Activated T-helper 1 cell treated with anti-CD3 and anti-CD28 coated beads, Interleukin-12 subunit alpha, Interleukin-12 subunit beta, Interleukin-2, Interleukin-4 antibody, amounts not matched to agents 30 ng/mL and 10 ng/mL and 1 ng/mL, durations not matched to agents 14 hours and 24 hours and 36 hours (primary cell): ENCODE measurements at regions of chr17 and their contacts with region 1.

Region 1: DNA sequence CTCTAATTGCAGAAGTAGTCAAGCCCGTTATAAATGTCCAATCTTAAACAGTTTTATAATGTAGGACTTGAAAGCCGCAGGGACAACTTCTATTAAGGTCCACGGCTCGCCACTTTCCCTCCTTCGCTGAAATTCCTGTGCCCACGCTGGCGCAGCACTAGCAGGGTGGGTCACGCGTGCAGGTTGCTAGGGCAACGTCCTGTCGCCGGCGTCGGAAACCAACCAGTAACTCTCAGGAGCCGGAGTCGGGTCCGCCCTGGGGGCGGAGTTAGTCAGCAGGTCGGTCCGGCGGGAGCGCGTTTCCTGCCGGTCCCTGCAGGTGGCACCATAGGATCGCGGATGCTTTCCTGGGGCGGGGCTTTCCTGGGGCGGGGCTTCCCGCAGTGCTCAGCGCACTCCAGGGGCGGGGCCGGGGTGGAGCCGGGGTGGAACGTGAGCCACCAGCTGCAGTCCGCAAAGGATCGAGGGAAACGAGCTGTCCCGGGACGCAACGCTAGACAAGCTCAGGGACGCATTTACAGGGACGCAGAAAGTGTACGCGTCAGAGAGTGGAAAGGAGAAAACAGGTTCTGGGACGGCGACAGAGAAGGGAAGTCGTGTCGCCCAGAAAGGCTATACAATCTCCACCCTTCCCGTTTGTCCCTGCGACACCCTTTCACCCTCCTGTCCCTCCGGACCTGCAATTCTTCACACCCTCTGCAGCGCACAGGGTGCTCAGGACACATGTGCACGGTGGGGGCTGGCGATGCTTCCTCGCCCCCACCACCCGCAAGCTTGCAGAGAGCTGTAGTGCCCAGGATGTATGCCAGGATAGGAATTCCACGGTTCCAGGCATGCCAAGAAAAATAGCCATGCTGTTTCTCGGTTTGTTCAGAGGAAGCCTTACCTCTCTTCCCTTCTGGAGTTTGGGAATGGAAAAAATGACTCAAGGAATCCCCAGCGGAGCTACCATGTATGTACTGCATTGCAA is 12.4 kb downstream of the COPZ2 start:
- DNase-seq: peak; percentile 94
- H3K4me3 Mint-ChIP-seq: peak overlapping the region; percentile 86
- H3K27ac Mint-ChIP-seq: peak overlapping the region; percentile 75
- H3K4me1 Mint-ChIP-seq: peaks cover 27% of the 10 kb centered on the region
- H3K27me3 Mint-ChIP-seq: peaks cover 29% of the 10 kb centered on the region

Region 2: DNA sequence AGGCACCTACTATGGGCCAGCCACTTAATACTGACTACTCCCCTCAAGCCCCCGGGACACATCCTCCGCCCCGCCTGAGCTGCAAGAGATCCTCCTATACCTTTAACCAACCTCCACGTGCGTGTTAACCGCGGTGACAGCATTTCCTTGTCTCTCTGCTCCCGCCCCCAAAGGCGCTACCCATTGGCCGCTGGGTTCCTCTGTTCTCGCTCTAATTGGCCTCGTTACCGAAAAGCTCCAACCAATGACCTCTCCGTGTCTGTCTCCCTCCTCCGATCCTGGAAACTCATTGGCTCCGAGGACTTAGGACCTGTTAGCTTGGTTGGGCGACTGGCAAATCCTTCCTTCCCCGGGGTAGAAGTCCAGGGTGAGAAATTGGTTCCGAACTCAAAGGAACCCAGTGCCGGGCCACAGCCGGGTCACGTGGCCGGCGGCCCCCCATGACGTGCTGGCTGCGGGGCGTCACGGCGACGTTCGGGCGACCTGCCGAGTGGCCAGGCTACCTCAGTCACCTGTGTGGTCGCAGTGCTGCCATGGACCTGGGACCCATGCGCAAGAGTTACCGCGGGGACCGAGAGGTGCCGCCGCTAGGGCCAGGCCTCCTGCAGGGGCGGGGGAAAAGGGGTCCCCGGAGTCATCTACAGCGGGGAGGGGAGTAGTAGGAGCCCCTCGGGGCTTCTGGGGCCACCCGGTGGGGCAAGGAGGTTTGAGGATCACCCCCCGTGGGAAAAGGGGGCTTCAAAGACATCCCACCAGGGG is 83.8 kb before region 1 on chr17 and contains the start of gene PNPO:
- intact Hi-C with region 1: loop called (anchors 1 kb)
- DNase-seq: peak; percentile 95
- H3K4me3 Mint-ChIP-seq: peak within 1 kb of the TSS; percentile 92
- H3K27ac Mint-ChIP-seq: peak within 1 kb of the TSS; percentile 96
- H3K4me1 Mint-ChIP-seq: peaks cover 68% of the 10 kb centered on the region
- H3K27me3 Mint-ChIP-seq: peaks cover 1% of the 10 kb centered on the region
- total RNA-seq, gene PNPO: 58.8 and 60.7 TPM in 2 replicates

Region 3: DNA sequence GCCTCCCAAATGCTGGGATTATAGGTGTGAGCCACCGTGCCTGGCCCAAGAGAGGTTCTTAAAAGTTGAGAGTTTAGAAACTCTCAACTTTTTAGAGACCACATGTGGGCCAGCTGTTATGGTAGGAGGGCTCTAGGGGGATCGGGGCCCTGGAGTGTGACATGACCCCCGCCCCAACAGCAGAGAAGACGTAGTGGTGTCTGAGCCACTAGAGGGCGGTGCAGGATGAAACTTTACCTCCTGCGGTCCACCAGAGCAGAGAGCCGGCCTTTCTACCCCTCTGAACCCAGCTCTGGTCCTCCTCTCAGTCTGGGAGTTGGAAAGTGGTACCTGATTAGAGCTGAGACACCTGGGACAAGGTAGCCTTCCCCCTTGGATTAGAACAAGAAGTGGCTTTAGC is 46.9 kb before region 1 on chr17:
- intact Hi-C with region 1: loop called (anchors 2 kb)
- DNase-seq: peak; percentile 29
- H3K4me3 Mint-ChIP-seq: no peak overlapping the region
- H3K27ac Mint-ChIP-seq: no peak overlapping the region
- H3K4me1 Mint-ChIP-seq: peaks cover 19% of the 10 kb centered on the region
- H3K27me3 Mint-ChIP-seq: no peaks in the 10 kb centered on the region

Region 4: GRCh38 chr17:48047741-48048383 is 22.6 kb after region 1 on chr17 and contains the start of gene NFE2L1:
- intact Hi-C with region 1: loop called (anchors 1 kb)
- DNase-seq: peak; percentile 97
- H3K4me3 Mint-ChIP-seq: peak within 1 kb of the TSS; percentile 99
- H3K27ac Mint-ChIP-seq: peak within 1 kb of the TSS; percentile 100
- H3K4me1 Mint-ChIP-seq: peaks cover 69% of the 10 kb centered on the region
- H3K27me3 Mint-ChIP-seq: peaks cover 1% of the 10 kb centered on the region
- total RNA-seq, gene NFE2L1: 86.6 and 92.0 TPM in 2 replicates

Region 5: GRCh38 chr17:48107168-48108132 is 82.2 kb after region 1 on chr17 and contains the start of gene SNX11:
- intact Hi-C with region 1: loop called (anchors 1 kb)
- DNase-seq: peak; percentile 91
- H3K4me3 Mint-ChIP-seq: peak within 1 kb of the TSS; percentile 100
- H3K27ac Mint-ChIP-seq: peak within 1 kb of the TSS; percentile 99
- H3K4me1 Mint-ChIP-seq: peaks cover 63% of the 10 kb centered on the region
- H3K27me3 Mint-ChIP-seq: no peaks in the 10 kb centered on the region
- total RNA-seq, gene SNX11: 31.1 and 37.1 TPM in 2 replicates

Region 6: GRCh38 chr17:48593840-48594537 is 568.8 kb after region 1 on chr17:
- intact Hi-C with region 1: loop called (anchors 1 kb)
- DNase-seq: peak; percentile 79
- H3K4me3 Mint-ChIP-seq: peak overlapping the region; percentile 82
- H3K27ac Mint-ChIP-seq: no peak overlapping the region
- H3K4me1 Mint-ChIP-seq: peaks cover 59% of the 10 kb centered on the region
- H3K27me3 Mint-ChIP-seq: peaks cover 75% of the 10 kb centered on the region